Activated naive CD4-positive, alpha-beta T cell treated with anti-CD3 and anti-CD28 coated beads for 36 hours (primary cell): ENCODE measurements at regions of chr2 and their contacts with region 1.

Region 1: DNA sequence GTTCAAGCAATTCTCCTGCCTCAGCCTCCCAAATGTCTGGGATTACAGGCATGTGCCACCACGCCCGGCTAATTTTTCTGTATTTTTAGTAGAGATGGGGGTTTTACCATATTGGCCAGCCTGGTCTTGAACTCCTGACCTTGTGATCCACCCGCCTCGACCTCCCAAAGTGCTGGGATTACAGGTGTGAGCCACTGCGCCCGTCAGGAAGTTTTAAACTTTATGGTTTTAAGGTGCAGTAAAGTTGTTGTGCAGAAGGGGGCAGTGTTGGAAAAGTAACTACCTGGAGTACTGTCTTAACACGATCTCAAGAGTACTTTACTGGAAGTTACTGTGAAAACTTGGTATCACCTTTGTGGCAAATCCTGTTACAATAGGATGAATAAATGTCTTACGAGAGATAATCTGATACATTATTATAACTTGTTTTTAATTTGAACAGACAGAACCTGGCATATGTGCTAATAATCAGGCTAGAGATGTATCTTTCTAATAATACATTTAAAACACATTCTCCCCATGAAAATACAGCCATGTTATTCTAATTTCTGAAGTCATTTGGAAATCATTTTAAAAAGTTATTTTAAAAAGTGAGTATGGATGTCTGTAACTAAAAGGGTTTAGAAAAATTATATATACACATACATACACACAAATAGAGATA is 10.8 kb downstream of the SPDYA start:
- DNase-seq: peak; percentile 81
- H3K4me3 Mint-ChIP-seq: no peak overlapping the region
- H3K27ac Mint-ChIP-seq: no peak overlapping the region
- H3K4me1 Mint-ChIP-seq: peaks cover 8% of the 10 kb centered on the region
- H3K27me3 Mint-ChIP-seq: no peaks in the 10 kb centered on the region

Region 2: DNA sequence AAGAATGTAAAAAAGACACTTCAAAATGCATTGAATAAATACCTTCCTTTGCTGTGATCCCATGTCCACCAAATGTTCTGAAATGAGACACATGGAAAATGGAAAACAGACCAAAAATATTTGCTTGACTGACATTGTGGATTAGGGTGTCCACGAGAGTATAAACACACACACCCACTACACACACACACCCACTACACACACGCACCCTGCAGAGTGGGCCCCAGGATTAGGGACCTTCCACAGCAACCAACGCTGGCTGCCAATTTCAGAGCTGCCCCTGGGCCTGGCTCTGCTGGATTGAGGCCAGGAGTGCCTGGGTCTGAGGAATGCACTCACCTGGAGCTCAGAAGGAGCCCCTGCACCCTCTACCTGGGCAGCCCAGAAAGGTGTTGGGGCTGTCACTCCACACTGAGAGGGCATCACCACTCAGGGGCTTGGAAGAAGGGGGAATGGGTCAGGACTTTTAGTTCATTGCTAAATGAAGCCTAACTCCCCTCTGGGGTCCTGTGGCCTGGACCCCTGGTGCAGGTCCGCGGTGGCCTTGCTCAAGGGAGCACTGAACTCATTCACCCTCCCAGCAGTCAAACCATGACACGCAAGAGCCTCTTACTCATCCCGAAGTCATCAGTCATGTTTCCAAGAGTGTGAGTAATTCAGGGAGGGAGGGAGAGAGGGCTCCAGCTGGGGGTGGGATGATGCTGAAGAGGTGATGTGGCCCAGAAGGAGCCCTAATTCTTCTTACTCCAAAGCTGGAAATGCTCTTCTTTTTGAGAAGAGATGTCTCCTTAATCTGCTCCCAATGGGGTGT is 375.8 kb before region 1 on chr2:
- CTCF ChIA-PET with region 1: no interaction called
- intact Hi-C with region 1: no loop called
- DNase-seq: peak; percentile 87
- H3K4me3 Mint-ChIP-seq: peak overlapping the region; percentile 37
- H3K27ac Mint-ChIP-seq: peak overlapping the region; percentile 80
- H3K4me1 Mint-ChIP-seq: peaks cover 68% of the 10 kb centered on the region
- H3K27me3 Mint-ChIP-seq: no peaks in the 10 kb centered on the region

Region 3: GRCh38 chr2:28870146-28870891 is 48.9 kb after region 1 on chr2 and contains the start of gene TRMT61B:
- CTCF ChIA-PET with region 1: interaction called, 7 read pairs
- intact Hi-C with region 1: loop called (anchors 2 kb)
- DNase-seq: peak; percentile 97
- H3K4me3 Mint-ChIP-seq: peak within 1 kb of the TSS; percentile 89
- H3K27ac Mint-ChIP-seq: peak within 1 kb of the TSS; percentile 89
- H3K4me1 Mint-ChIP-seq: peaks cover 31% of the 10 kb centered on the region
- H3K27me3 Mint-ChIP-seq: no peaks in the 10 kb centered on the region
- total RNA-seq, gene TRMT61B: 13.6 to 15.5 TPM

Region 4: GRCh38 chr2:28894470-28895177 is 73.2 kb after region 1 on chr2 and contains the start of gene WDR43:
- CTCF ChIA-PET with region 1: no interaction called
- intact Hi-C with region 1: loop called (anchors 2 kb)
- DNase-seq: peak; percentile 97
- H3K4me3 Mint-ChIP-seq: peak within 1 kb of the TSS; percentile 100
- H3K27ac Mint-ChIP-seq: peak within 1 kb of the TSS; percentile 97
- H3K4me1 Mint-ChIP-seq: peaks cover 34% of the 10 kb centered on the region
- H3K27me3 Mint-ChIP-seq: no peaks in the 10 kb centered on the region
- total RNA-seq, gene WDR43: 76.5 to 78.7 TPM

Region 5: GRCh38 chr2:28952816-28953211 is 131.4 kb after region 1 on chr2:
- CTCF ChIA-PET with region 1: interaction called, 3 read pairs
- intact Hi-C with region 1: loop called (anchors 1 kb)
- DNase-seq: peak; percentile 37
- H3K4me3 Mint-ChIP-seq: no peak overlapping the region
- H3K27ac Mint-ChIP-seq: no peak overlapping the region
- H3K4me1 Mint-ChIP-seq: peaks cover 3% of the 10 kb centered on the region
- H3K27me3 Mint-ChIP-seq: no peaks in the 10 kb centered on the region

Region 6: GRCh38 chr2:29196792-29197788 is 375.7 kb after region 1 on chr2:
- CTCF ChIA-PET with region 1: interaction called, 4 read pairs
- intact Hi-C with region 1: loop called (anchors 1 kb)
- DNase-seq: peak; percentile 91
- H3K4me3 Mint-ChIP-seq: no peak overlapping the region
- H3K27ac Mint-ChIP-seq: no peak overlapping the region
- H3K4me1 Mint-ChIP-seq: no peaks in the 10 kb centered on the region
- H3K27me3 Mint-ChIP-seq: no peaks in the 10 kb centered on the region

Region 7: GRCh38 chr2:29544917-29545316 is 723.5 kb after region 1 on chr2:
- CTCF ChIA-PET with region 1: no interaction called
- intact Hi-C with region 1: loop called (anchors 5 kb)
- DNase-seq: no peak
- H3K4me3 Mint-ChIP-seq: no peak overlapping the region
- H3K27ac Mint-ChIP-seq: no peak overlapping the region
- H3K4me1 Mint-ChIP-seq: no peaks in the 10 kb centered on the region
- H3K27me3 Mint-ChIP-seq: peaks cover 15% of the 10 kb centered on the region